Prostate gland (tissue), 2 donors: ENCODE measurements at regions of chr15 and their contacts with region 1.

Region 1: GRCh38 chr15:52759969-52760368 is 30.2 kb downstream of the ONECUT1 start:
- DNase-seq: no peak
- H3K4me3 ChIP-seq: no peak overlapping the region
- H3K27ac ChIP-seq: no peak overlapping the region
- H3K4me1 ChIP-seq: no peaks in the 10 kb centered on the region
- H3K27me3 ChIP-seq: no peaks in the 10 kb centered on the region
- CTCF ChIP-seq: no peak
- POLR2A ChIP-seq: no peak

Region 2: DNA sequence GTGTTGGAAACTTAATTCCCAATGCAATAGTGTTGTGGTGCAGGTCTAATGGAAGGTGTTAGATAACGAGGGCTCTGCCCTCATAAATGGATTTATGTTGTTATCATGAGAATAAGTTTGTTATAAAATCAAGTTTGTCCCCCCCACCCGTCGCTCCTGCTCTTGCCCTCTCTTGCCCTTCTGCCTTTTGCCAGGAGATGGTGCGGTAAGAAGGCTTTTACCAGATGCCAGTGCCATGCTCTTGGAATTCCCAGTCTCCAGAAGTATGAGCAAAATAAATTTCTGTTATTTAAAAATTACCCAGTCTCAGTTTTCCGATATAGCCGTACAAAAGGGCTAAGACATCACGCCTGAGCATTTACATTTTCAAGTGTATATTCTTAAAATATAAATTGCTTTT is 52.8 kb after region 1 on chr15:
- intact Hi-C with region 1: loop called (anchors 10 kb)
- DNase-seq: no peak
- H3K4me3 ChIP-seq: no peak overlapping the region
- H3K27ac ChIP-seq: no peak overlapping the region
- H3K4me1 ChIP-seq: no peaks in the 10 kb centered on the region
- H3K27me3 ChIP-seq: peaks cover 11% of the 10 kb centered on the region
- CTCF ChIP-seq: no peak
- POLR2A ChIP-seq: no peak